ENCODE measurements at regions of chr12 and their contacts with region 1.

Region 1: GRCh38 chr12:48235796-48236333 is 32.8 kb upstream of the OR10AD1 start:
- DNase-seq: no peak
- H3K4me3 ChIP-seq: no peak overlapping the region
- H3K27ac ChIP-seq: no peak overlapping the region
- H3K4me1 ChIP-seq: no peaks in the 10 kb centered on the region
- H3K27me3 ChIP-seq: peaks cover 2 to 3% of the 10 kb centered on the region in 2 experiments
- CTCF ChIP-seq: no peak
- POLR2A ChIP-seq: no peak

Region 2: GRCh38 chr12:48219638-48220037 is 16.2 kb before region 1 on chr12:
- CTCF ChIA-PET with region 1: interaction called, 5 read pairs
- POLR2A ChIA-PET with region 1: no interaction called
- dilution Hi-C with region 1: no loop called
- intact Hi-C with region 1: loop called (anchors 1 kb)
- DNase-seq: no peak
- H3K4me3 ChIP-seq: no peak overlapping the region
- H3K27ac ChIP-seq: no peak overlapping the region
- H3K4me1 ChIP-seq: no peaks in the 10 kb centered on the region
- H3K27me3 ChIP-seq: peaks cover 15 to 16% of the 10 kb centered on the region in 2 experiments
- CTCF ChIP-seq: no peak
- POLR2A ChIP-seq: no peak

Region 3: GRCh38 chr12:48247181-48247966 is 11.5 kb after region 1 on chr12:
- CTCF ChIA-PET with region 1: no interaction called
- POLR2A ChIA-PET with region 1: no interaction called
- dilution Hi-C with region 1: no loop called
- intact Hi-C with region 1: no loop called
- DNase-seq: no peak
- H3K4me3 ChIP-seq: no peak overlapping the region
- H3K27ac ChIP-seq: no peak overlapping the region
- H3K4me1 ChIP-seq: no peaks in the 10 kb centered on the region
- H3K27me3 ChIP-seq: peaks cover 11 to 14% of the 10 kb centered on the region in 2 experiments
- CTCF ChIP-seq: no peak
- POLR2A ChIP-seq: no peak

Region 4: GRCh38 chr12:48572326-48572725 is 336.5 kb after region 1 on chr12:
- CTCF ChIA-PET with region 1: no interaction called
- POLR2A ChIA-PET with region 1: no interaction called
- dilution Hi-C with region 1: no loop called
- intact Hi-C with region 1: no loop called
- DNase-seq: peak; percentile 34
- H3K4me3 ChIP-seq: no peak overlapping the region
- H3K27ac ChIP-seq: no peak overlapping the region
- H3K4me1 ChIP-seq: no peaks in the 10 kb centered on the region
- H3K27me3 ChIP-seq: peaks cover 3 to 12% of the 10 kb centered on the region in 2 experiments
- CTCF ChIP-seq: no peak
- POLR2A ChIP-seq: no peak

Measured in endothelial cell of umbilical vein (primary cell).